ENCODE measurements at regions of chr3 and their contacts with region 1.

Region 1: DNA sequence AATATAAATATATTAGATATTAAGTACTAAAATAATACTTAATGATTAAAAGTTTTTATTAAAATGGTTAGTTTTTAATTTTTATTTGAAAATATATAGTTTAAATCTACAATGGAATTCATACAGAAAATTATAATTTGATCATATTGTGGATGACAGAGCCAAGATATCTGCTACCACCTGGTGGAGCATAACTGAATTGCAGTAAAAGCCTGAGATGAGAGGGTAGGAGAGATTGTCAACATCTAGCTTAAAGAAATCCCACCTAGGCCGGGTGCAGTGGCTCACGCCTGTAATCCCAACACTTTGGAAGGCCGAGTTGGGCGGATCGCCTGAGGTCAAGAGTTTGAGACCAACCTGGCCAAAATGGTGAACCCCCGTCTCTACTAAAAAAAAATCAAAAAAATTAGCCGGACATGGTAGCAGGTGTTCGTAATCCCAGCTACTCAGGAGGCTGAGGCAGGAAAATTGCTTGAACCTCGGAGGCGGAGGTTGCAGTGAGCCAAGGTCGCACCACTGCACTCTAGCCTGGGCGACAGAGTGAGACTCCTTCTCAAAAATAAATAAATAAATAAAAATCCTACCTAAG is 25.1 kb upstream of the CSTA start:
- H3K4me3 Mint-ChIP-seq: no peak overlapping the region
- H3K27ac Mint-ChIP-seq: no peak overlapping the region
- H3K4me1 Mint-ChIP-seq: peaks cover 5% of the 10 kb centered on the region
- H3K27me3 Mint-ChIP-seq: no peaks in the 10 kb centered on the region

Region 2: DNA sequence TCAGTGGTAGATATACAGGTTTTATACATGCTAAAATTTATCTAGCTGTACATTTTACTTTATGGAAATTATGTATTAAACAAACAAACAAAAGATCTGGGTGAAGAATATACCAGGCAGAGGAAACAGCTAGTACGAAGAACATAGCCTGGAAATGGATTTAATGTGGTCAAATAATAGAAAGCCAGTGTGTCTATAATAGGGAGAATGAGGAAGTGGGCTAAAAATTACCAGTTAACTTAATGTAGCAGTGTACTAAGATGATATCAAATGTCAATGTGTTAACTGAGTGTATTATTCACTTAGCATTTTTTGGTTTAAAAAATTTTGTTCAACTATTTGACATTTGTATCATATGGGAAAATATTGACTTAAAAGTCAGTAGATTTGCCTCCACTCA is 428.5 kb before region 1 on chr3:
- intact Hi-C with region 1: no loop called
- H3K4me3 Mint-ChIP-seq: no peak overlapping the region
- H3K27ac Mint-ChIP-seq: no peak overlapping the region
- H3K4me1 Mint-ChIP-seq: peaks cover 35% of the 10 kb centered on the region
- H3K27me3 Mint-ChIP-seq: no peaks in the 10 kb centered on the region

Region 3: GRCh38 chr3:121979734-121980449 is 320.1 kb before region 1 on chr3:
- intact Hi-C with region 1: loop called (anchors 5 kb)
- H3K4me3 Mint-ChIP-seq: no peak overlapping the region
- H3K27ac Mint-ChIP-seq: no peak overlapping the region
- H3K4me1 Mint-ChIP-seq: peaks cover 22% of the 10 kb centered on the region
- H3K27me3 Mint-ChIP-seq: no peaks in the 10 kb centered on the region

Region 4: GRCh38 chr3:122101646-122102045 is 198.3 kb before region 1 on chr3:
- intact Hi-C with region 1: loop called (anchors 2 kb)
- H3K4me3 Mint-ChIP-seq: no peak overlapping the region
- H3K27ac Mint-ChIP-seq: peak overlapping the region; percentile 57
- H3K4me1 Mint-ChIP-seq: peaks cover 22% of the 10 kb centered on the region
- H3K27me3 Mint-ChIP-seq: no peaks in the 10 kb centered on the region

Region 5: GRCh38 chr3:122263974-122264588 is 35.9 kb before region 1 on chr3:
- intact Hi-C with region 1: loop called (anchors 5 kb)
- H3K4me3 Mint-ChIP-seq: no peak overlapping the region
- H3K27ac Mint-ChIP-seq: no peak overlapping the region
- H3K4me1 Mint-ChIP-seq: peaks cover 47% of the 10 kb centered on the region
- H3K27me3 Mint-ChIP-seq: no peaks in the 10 kb centered on the region